ENCODE measurements at regions of chr11 and their contacts with region 1.

Region 1: GRCh38 chr11:126416542-126417090 is 61.1 kb downstream of the ST3GAL4 start:
- DNase-seq: peak; percentile 27
- ATAC-seq: peak; percentile 88
- H3K4me3 ChIP-seq: 0 out of 2 replicates have a peak overlapping the region, but pooled peaks have one; percentile 17
- H3K27ac ChIP-seq: no peak overlapping the region
- H3K4me1 ChIP-seq: peaks cover 13% of the 10 kb centered on the region
- H3K27me3 ChIP-seq: peaks cover 0 to 2% of the 10 kb centered on the region in 2 experiments; a peak in 2 of 4 replicates
- CTCF ChIP-seq: no peak
- EP300 ChIP-seq: no peak
- POLR2A ChIP-seq: no peak
- RAD21 ChIP-seq: no peak

Region 2: GRCh38 chr11:126355324-126355925 is 61.2 kb before region 1 on chr11 and contains the start of gene ST3GAL4:
- CTCF ChIA-PET with region 1: interaction called, 3 read pairs
- POLR2A ChIA-PET with region 1: no interaction called
- RAD21 ChIA-PET with region 1: interaction called, 5 read pairs
- SMC1A ChIA-PET with region 1: interaction called, 3 read pairs
- in situ Hi-C with region 1: no loop called
- intact Hi-C with region 1: loop called (anchors 5 kb)
- DNase-seq: peak; percentile 11
- ATAC-seq: peak; percentile 79
- H3K4me3 ChIP-seq: peak within 1 kb of the TSS; percentile 73
- H3K27ac ChIP-seq: peak within 1 kb of the TSS; percentile 87
- H3K4me1 ChIP-seq: peaks cover 21% of the 10 kb centered on the region
- H3K27me3 ChIP-seq: no peaks in the 10 kb centered on the region
- CTCF ChIP-seq: no peak
- EP300 ChIP-seq: no peak
- POLR2A ChIP-seq: peak; percentile 69
- RAD21 ChIP-seq: no peak
- polyA plus RNA-seq, gene ST3GAL4: not detected

Region 3: GRCh38 chr11:126378763-126379162 is 37.9 kb before region 1 on chr11:
- CTCF ChIA-PET with region 1: no interaction called
- POLR2A ChIA-PET with region 1: no interaction called
- RAD21 ChIA-PET with region 1: no interaction called
- SMC1A ChIA-PET with region 1: no interaction called
- in situ Hi-C with region 1: no loop called
- intact Hi-C with region 1: no loop called
- DNase-seq: no peak
- ATAC-seq: no peak
- H3K4me3 ChIP-seq: no peak overlapping the region
- H3K27ac ChIP-seq: no peak overlapping the region
- H3K4me1 ChIP-seq: no peaks in the 10 kb centered on the region
- H3K27me3 ChIP-seq: no peaks in the 10 kb centered on the region
- CTCF ChIP-seq: no peak
- EP300 ChIP-seq: no peak
- POLR2A ChIP-seq: no peak
- RAD21 ChIP-seq: no peak

Region 4: DNA sequence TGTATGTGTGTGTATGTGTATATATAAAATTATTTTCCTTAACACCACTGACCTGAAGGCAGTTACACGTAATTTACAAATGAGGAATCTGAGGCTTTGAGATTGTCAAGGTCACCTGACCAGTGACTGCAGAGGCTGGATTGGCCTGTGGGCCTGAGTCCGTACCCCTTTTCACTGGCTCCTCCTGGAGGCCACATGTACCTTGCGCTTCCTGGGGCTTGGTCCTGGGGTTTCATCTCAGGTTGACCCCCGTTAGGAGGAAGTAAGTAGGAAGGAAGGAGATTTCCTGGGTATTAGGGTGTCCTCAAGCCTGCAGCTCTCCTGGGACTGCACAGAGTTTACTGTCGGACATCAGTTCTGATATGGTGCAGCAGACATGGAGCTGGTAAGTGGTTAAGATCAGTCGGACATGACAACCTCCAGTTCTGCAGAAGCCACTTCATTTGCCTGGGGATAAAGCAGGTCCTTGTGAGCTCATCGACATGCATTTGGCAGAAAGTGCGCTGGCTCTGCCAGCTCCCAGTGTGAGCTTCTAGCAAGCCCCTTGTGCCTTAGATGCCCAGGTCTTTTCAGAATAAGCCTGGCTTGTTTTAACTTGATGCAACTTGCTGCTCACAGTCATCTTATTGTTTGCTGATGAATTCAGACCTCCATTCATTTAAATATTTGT is 24.5 kb before region 1 on chr11:
- CTCF ChIA-PET with region 1: no interaction called
- POLR2A ChIA-PET with region 1: no interaction called
- RAD21 ChIA-PET with region 1: no interaction called
- SMC1A ChIA-PET with region 1: no interaction called
- in situ Hi-C with region 1: no loop called
- intact Hi-C with region 1: no loop called
- DNase-seq: peak; percentile 35
- ATAC-seq: peak; percentile 75
- H3K4me3 ChIP-seq: no peak overlapping the region
- H3K27ac ChIP-seq: no peak overlapping the region
- H3K4me1 ChIP-seq: peaks cover 9% of the 10 kb centered on the region
- H3K27me3 ChIP-seq: no peaks in the 10 kb centered on the region
- CTCF ChIP-seq: peak in 2 of 3 experiments; percentile 22 to 29; a peak in 4 of 6 replicates
- EP300 ChIP-seq: no peak
- POLR2A ChIP-seq: no peak
- RAD21 ChIP-seq: peak; percentile 29; the same call in 1 of the 2 replicates

Region 5: DNA sequence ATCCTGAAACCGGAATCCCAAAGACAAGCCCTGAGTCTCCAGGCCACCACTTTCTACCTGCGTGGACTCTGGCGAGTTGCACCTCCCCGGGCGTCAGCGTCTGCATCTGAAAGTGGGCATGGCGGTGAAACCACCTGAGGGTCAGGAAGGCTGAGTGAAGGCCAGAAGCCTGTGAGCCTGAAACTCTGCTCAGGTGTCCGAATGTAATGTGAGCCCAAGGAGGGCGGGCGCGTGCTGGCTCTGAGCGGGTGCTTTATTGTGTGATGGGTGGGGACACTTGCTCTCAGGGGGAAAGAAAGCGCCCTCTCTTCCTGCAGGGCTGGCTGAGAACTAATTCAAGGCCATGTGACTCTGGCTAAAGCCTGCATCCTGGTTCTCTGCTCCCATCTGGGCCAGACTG is 74.5 kb after region 1 on chr11:
- CTCF ChIA-PET with region 1: no interaction called
- POLR2A ChIA-PET with region 1: no interaction called
- RAD21 ChIA-PET with region 1: no interaction called
- SMC1A ChIA-PET with region 1: no interaction called
- in situ Hi-C with region 1: no loop called
- intact Hi-C with region 1: no loop called
- DNase-seq: no peak
- ATAC-seq: no peak
- H3K4me3 ChIP-seq: no peak overlapping the region
- H3K27ac ChIP-seq: no peak overlapping the region
- H3K4me1 ChIP-seq: no peaks in the 10 kb centered on the region
- H3K27me3 ChIP-seq: peaks cover 0 to 3% of the 10 kb centered on the region in 2 experiments; a peak in 3 of 4 replicates
- CTCF ChIP-seq: no peak
- EP300 ChIP-seq: no peak
- POLR2A ChIP-seq: no peak
- RAD21 ChIP-seq: no peak

Region 6: GRCh38 chr11:127252321-127252720 is 835.7 kb after region 1 on chr11:
- CTCF ChIA-PET with region 1: no interaction called
- POLR2A ChIA-PET with region 1: no interaction called
- RAD21 ChIA-PET with region 1: no interaction called
- SMC1A ChIA-PET with region 1: no interaction called
- in situ Hi-C with region 1: no loop called
- intact Hi-C with region 1: no loop called
- DNase-seq: no peak
- ATAC-seq: no peak; the same call in 2 of the 3 replicates
- H3K4me3 ChIP-seq: no peak overlapping the region
- H3K27ac ChIP-seq: no peak overlapping the region
- H3K4me1 ChIP-seq: no peaks in the 10 kb centered on the region
- H3K27me3 ChIP-seq: peaks cover 0 to 3% of the 10 kb centered on the region in 2 experiments; a peak in 2 of 4 replicates
- CTCF ChIP-seq: no peak
- EP300 ChIP-seq: no peak
- POLR2A ChIP-seq: no peak
- RAD21 ChIP-seq: no peak